Activated CD4-positive, alpha-beta memory T cell treated with anti-CD3 and anti-CD28 coated beads for 36 hours (primary cell): ENCODE measurements at regions of chr19 and their contacts with region 1.

Region 1: DNA sequence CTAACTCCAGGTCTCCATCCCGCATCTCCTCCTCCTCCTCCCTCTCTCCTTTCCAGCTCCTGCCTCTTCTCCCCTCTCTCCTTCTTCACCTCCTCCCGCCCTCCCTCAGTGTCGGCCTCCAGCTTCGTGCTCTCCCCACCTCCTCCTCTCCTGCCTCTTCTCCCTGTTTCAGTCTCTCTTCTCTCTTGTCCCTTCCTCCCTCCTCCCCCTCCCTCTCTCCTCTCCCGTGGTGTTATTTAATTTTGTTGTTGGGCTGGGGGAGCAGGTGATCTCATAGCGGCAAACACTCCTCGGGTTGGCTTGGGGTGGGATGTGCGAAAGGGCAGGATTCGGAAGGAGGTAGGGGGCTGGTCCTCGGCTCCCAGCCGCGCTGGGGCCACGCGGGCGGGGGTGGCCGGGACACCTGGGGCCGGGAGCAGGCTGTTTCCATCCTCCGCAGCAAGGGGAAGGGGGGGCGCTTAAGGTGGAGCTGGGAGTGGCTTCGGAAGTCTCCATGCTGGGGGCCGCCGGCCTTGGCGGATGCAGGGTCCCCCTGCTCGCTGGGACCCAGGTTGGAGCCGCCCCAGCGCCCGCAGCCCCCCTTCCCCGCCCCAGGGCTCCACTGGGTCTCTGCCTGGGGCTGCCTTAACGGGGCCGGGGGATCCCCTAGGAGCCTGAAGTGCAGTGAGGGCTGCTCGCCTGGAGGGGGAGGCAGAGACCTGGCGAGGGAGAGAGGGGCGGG is at the start of gene CA11:
- DNase-seq: peak; percentile 96
- H3K4me3 Mint-ChIP-seq: peak within 1 kb of the TSS; percentile 82
- H3K27ac Mint-ChIP-seq: peak within 1 kb of the TSS; percentile 77
- H3K4me1 Mint-ChIP-seq: peaks cover 35% of the 10 kb centered on the region
- H3K27me3 Mint-ChIP-seq: no peaks in the 10 kb centered on the region
- total RNA-seq, gene CA11: 12.7 to 15.9 TPM

Region 2: GRCh38 chr19:48674921-48675824 is 29.0 kb after region 1 on chr19:
- CTCF ChIA-PET with region 1: interaction called, 10 read pairs
- POLR2A ChIA-PET with region 1: no interaction called
- intact Hi-C with region 1: loop called (anchors 1 kb)
- DNase-seq: peak; percentile 82
- H3K4me3 Mint-ChIP-seq: no peak overlapping the region
- H3K27ac Mint-ChIP-seq: no peak overlapping the region
- H3K4me1 Mint-ChIP-seq: peaks cover 6% of the 10 kb centered on the region
- H3K27me3 Mint-ChIP-seq: no peaks in the 10 kb centered on the region

Region 3: GRCh38 chr19:48685583-48685982 is 39.4 kb after region 1 on chr19:
- CTCF ChIA-PET with region 1: no interaction called
- POLR2A ChIA-PET with region 1: no interaction called
- intact Hi-C with region 1: no loop called
- DNase-seq: no peak
- H3K4me3 Mint-ChIP-seq: no peak overlapping the region
- H3K27ac Mint-ChIP-seq: no peak overlapping the region
- H3K4me1 Mint-ChIP-seq: no peaks in the 10 kb centered on the region
- H3K27me3 Mint-ChIP-seq: no peaks in the 10 kb centered on the region

Region 4: DNA sequence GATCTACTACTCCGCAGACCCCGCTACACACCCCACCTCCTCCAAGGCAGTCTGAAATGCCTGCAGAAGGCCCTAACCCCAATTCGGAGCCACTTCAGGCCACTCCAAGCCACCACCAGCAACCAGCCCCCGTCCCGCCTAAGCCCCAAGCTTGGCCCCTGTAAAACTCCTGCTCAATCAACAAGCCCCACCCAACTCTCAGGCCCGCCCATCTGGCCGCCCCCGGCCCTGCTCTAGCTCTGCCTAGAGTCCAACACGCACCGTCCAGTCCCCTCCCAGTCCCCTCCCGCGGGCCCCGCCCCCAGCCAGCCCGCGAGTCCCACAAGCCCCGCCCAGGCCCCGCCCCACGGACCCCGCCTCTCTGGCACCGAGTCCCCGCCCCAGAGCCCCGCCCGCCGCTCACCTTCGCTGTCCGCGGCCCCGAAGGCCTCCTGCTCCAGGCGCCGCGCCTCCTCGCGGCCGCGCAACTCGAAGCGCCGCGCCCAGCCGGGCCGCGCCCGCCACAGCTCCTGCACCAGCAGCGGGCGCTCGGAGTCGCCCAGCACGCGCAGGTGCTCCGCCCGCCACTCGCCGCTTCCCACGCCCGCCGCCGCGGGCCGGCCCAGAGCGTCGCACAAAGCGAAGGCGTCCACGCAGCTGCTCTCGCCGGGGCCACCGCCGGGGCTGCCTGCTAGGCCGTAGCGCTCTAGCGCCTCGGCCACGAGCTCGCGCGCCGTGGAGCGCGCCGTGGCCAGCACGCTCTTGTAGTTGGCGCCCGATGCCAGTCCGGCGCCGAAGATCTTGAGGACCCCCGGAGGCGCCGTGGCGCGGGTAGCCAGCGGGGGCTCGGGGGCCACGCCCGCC is 92.6 kb after region 1 on chr19:
- CTCF ChIA-PET with region 1: interaction called, 10 read pairs
- POLR2A ChIA-PET with region 1: no interaction called
- intact Hi-C with region 1: loop called (anchors 5 kb)
- DNase-seq: peak; percentile 97
- H3K4me3 Mint-ChIP-seq: peak overlapping the region; percentile 34
- H3K27ac Mint-ChIP-seq: peak overlapping the region; percentile 21
- H3K4me1 Mint-ChIP-seq: peaks cover 13% of the 10 kb centered on the region
- H3K27me3 Mint-ChIP-seq: peaks cover 7% of the 10 kb centered on the region

Region 5: GRCh38 chr19:48835734-48836088 is 189.6 kb after region 1 on chr19:
- CTCF ChIA-PET with region 1: interaction called, 3 read pairs
- POLR2A ChIA-PET with region 1: no interaction called
- intact Hi-C with region 1: loop called (anchors 2 kb)
- DNase-seq: peak; percentile 96
- H3K4me3 Mint-ChIP-seq: peak overlapping the region; percentile 73
- H3K27ac Mint-ChIP-seq: no peak overlapping the region
- H3K4me1 Mint-ChIP-seq: peaks cover 14% of the 10 kb centered on the region
- H3K27me3 Mint-ChIP-seq: peaks cover 9% of the 10 kb centered on the region